ENCODE measurements at regions of chr6 and their contacts with region 1.

Region 1: GRCh38 chr6:81752138-81752920 is at the start of gene TENT5A:
- DNase-seq: peak; percentile 89
- H3K4me3 Mint-ChIP-seq: peak within 1 kb of the TSS; percentile 88
- H3K27ac Mint-ChIP-seq: peak within 1 kb of the TSS; percentile 77
- H3K4me1 Mint-ChIP-seq: peaks cover 28% of the 10 kb centered on the region
- H3K27me3 Mint-ChIP-seq: peaks cover 12% of the 10 kb centered on the region
- total RNA-seq, gene TENT5A: 0.72 to 1.0 TPM

Region 2: DNA sequence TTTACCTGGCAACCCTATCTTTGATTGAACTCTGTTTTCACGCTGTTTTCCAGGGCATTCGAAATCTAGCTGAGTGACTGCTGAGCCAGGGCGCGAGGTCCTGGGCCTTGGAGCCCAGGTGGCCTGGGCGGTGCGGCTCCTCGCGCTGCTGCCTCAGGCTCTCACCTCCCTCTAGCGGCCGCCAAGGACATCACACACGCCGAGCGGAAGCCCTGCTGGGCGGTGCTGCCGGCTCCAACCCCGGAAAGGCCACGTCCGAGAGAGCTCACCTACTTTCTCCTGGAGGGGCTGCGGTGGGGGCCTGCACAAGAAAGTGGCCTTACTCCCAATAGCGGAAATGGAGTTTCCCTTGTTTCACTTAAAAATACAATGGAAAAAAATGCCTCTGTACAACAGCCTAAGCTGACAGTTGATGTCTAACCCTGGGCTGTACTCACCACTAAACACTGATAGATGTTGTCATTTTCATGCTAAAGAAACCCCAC is 1882.7 kb before region 1 on chr6:
- CTCF ChIA-PET with region 1: no interaction called
- intact Hi-C with region 1: loop called (anchors 5 kb)
- DNase-seq: peak; percentile 87
- H3K4me3 Mint-ChIP-seq: peak overlapping the region; percentile 41
- H3K27ac Mint-ChIP-seq: no peak overlapping the region
- H3K4me1 Mint-ChIP-seq: peaks cover 7% of the 10 kb centered on the region
- H3K27me3 Mint-ChIP-seq: peaks cover 4% of the 10 kb centered on the region

Region 3: GRCh38 chr6:80106418-80107235 is 1645.7 kb before region 1 on chr6 and contains the start of gene BCKDHB:
- CTCF ChIA-PET with region 1: no interaction called
- intact Hi-C with region 1: loop called (anchors 1 kb)
- DNase-seq: peak; percentile 99
- H3K4me3 Mint-ChIP-seq: peak within 1 kb of the TSS; percentile 90
- H3K27ac Mint-ChIP-seq: peak within 1 kb of the TSS; percentile 84
- H3K4me1 Mint-ChIP-seq: peaks cover 10% of the 10 kb centered on the region
- H3K27me3 Mint-ChIP-seq: no peaks in the 10 kb centered on the region
- total RNA-seq, gene BCKDHB: 15.5 to 18.5 TPM

Region 4: DNA sequence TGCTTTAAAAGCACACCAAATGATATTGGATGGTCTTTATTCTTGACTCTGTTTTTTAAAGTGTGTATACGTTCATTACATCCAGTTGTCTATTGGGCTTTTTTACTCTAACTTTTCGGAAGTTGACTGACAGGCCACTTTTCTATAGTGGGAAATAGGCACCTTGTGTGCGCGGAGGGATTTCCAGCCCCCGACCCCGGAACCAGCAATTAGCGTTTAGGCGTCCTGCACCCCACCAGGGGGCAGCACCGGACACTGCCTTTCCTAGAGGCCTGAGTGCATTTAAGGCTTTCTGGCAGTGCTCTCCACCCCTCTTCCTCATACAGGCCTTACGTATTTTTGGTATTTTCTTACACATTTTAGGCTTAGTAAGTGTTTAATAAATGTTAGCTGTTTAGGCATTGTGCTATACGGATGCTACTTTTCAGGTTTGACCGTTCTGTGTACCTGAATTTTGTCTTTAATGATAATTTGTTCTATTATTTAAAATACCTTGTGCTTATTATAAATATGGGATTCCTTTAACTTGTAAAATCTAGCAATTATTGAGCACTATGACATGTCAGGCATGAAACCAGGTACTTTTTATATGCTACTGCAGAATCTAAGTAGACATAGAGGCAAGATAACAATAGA is 1414.0 kb before region 1 on chr6:
- CTCF ChIA-PET with region 1: interaction called, 4 read pairs
- intact Hi-C with region 1: loop called (anchors 1 kb)
- DNase-seq: peak; percentile 70
- H3K4me3 Mint-ChIP-seq: no peak overlapping the region
- H3K27ac Mint-ChIP-seq: no peak overlapping the region
- H3K4me1 Mint-ChIP-seq: no peaks in the 10 kb centered on the region
- H3K27me3 Mint-ChIP-seq: no peaks in the 10 kb centered on the region

Region 5: GRCh38 chr6:81241126-81242041 is 510.9 kb before region 1 on chr6:
- CTCF ChIA-PET with region 1: no interaction called
- intact Hi-C with region 1: loop called (anchors 5 kb)
- DNase-seq: no peak
- H3K4me3 Mint-ChIP-seq: no peak overlapping the region
- H3K27ac Mint-ChIP-seq: no peak overlapping the region
- H3K4me1 Mint-ChIP-seq: no peaks in the 10 kb centered on the region
- H3K27me3 Mint-ChIP-seq: no peaks in the 10 kb centered on the region

Region 6: GRCh38 chr6:81939774-81940165 is 187.4 kb after region 1 on chr6:
- CTCF ChIA-PET with region 1: no interaction called
- intact Hi-C with region 1: no loop called
- DNase-seq: no peak
- H3K4me3 Mint-ChIP-seq: no peak overlapping the region
- H3K27ac Mint-ChIP-seq: no peak overlapping the region
- H3K4me1 Mint-ChIP-seq: no peaks in the 10 kb centered on the region
- H3K27me3 Mint-ChIP-seq: no peaks in the 10 kb centered on the region

Region 7: GRCh38 chr6:82247634-82248232 is 495.4 kb after region 1 on chr6 and contains the start of gene IBTK:
- CTCF ChIA-PET with region 1: no interaction called
- intact Hi-C with region 1: loop called (anchors 1 kb)
- DNase-seq: peak; percentile 91
- H3K4me3 Mint-ChIP-seq: peak within 1 kb of the TSS; percentile 92
- H3K27ac Mint-ChIP-seq: peak within 1 kb of the TSS; percentile 90
- H3K4me1 Mint-ChIP-seq: peaks cover 32% of the 10 kb centered on the region
- H3K27me3 Mint-ChIP-seq: no peaks in the 10 kb centered on the region
- total RNA-seq, gene IBTK: 25.3 to 25.9 TPM

Region 8: GRCh38 chr6:82555801-82556200 is 803.5 kb after region 1 on chr6:
- CTCF ChIA-PET with region 1: no interaction called
- intact Hi-C with region 1: no loop called
- DNase-seq: no peak
- H3K4me3 Mint-ChIP-seq: no peak overlapping the region
- H3K27ac Mint-ChIP-seq: no peak overlapping the region
- H3K4me1 Mint-ChIP-seq: no peaks in the 10 kb centered on the region
- H3K27me3 Mint-ChIP-seq: peaks cover 4% of the 10 kb centered on the region

Region 9: GRCh38 chr6:82783587-82784236 is 1031.4 kb after region 1 on chr6:
- CTCF ChIA-PET with region 1: no interaction called
- intact Hi-C with region 1: no loop called
- DNase-seq: no peak
- H3K4me3 Mint-ChIP-seq: no peak overlapping the region
- H3K27ac Mint-ChIP-seq: no peak overlapping the region
- H3K4me1 Mint-ChIP-seq: no peaks in the 10 kb centered on the region
- H3K27me3 Mint-ChIP-seq: peaks cover 11% of the 10 kb centered on the region